Common myeloid progenitor, CD34-positive (primary cell): ENCODE measurements at regions of chr10 and their contacts with region 1.

Region 1: DNA sequence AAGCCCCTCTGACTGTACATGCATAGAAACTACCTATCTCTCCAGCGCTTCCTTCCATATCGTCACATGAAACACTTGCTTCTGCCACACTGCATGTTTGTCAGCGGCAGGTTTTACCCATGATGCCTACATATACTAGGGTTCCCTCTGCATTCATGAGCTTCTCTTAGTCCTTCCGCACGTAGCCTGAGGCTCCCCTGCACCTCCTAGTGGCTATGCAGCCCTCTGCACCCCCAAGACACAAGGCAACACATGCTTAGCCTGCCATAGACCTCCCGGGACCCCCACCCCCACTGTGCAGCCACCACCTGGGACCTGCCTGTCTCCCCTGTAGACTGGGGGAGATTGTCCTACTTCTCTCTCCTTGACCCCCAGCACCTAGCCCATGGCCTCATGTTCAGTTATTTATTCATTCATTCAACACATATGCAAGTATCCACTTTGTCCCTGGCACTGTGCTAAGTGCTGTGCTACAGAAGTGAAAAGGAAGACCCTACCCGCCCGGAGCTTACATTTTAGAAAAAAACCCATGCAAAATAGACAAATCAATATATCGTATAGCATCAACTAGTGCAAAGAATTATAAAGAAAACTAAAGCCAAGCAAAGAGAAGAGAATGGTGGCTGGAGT is 23.5 kb downstream of the TMEM273 start:
- DNase-seq: peak; percentile 75 to 87 (median 83)
- H3K4me3 ChIP-seq: peak overlapping the region in 1 of 7 experiments; percentile 7
- H3K27ac ChIP-seq: no peak overlapping the region
- H3K4me1 ChIP-seq: peaks cover 0 to 14% (median 6%) of the 10 kb centered on the region in 4 experiments
- H3K27me3 ChIP-seq: no peaks in the 10 kb centered on the region

Region 2: GRCh38 chr10:48976196-48976595 is 188.5 kb before region 1 on chr10:
- CTCF ChIA-PET with region 1: interaction called, 52 read pairs
- POLR2A ChIA-PET with region 1: no interaction called
- DNase-seq: peak; percentile 3 to 21 (median 17)
- H3K4me3 ChIP-seq: no peak overlapping the region
- H3K27ac ChIP-seq: no peak overlapping the region
- H3K4me1 ChIP-seq: no peaks in the 10 kb centered on the region
- H3K27me3 ChIP-seq: no peaks in the 10 kb centered on the region

Region 3: GRCh38 chr10:48981310-48981907 is 183.3 kb before region 1 on chr10:
- CTCF ChIA-PET with region 1: interaction called, 52 read pairs
- POLR2A ChIA-PET with region 1: no interaction called
- DNase-seq: peak; percentile 25 to 45 (median 36)
- H3K4me3 ChIP-seq: no peak overlapping the region
- H3K27ac ChIP-seq: no peak overlapping the region
- H3K4me1 ChIP-seq: no peaks in the 10 kb centered on the region
- H3K27me3 ChIP-seq: no peaks in the 10 kb centered on the region

Region 4: DNA sequence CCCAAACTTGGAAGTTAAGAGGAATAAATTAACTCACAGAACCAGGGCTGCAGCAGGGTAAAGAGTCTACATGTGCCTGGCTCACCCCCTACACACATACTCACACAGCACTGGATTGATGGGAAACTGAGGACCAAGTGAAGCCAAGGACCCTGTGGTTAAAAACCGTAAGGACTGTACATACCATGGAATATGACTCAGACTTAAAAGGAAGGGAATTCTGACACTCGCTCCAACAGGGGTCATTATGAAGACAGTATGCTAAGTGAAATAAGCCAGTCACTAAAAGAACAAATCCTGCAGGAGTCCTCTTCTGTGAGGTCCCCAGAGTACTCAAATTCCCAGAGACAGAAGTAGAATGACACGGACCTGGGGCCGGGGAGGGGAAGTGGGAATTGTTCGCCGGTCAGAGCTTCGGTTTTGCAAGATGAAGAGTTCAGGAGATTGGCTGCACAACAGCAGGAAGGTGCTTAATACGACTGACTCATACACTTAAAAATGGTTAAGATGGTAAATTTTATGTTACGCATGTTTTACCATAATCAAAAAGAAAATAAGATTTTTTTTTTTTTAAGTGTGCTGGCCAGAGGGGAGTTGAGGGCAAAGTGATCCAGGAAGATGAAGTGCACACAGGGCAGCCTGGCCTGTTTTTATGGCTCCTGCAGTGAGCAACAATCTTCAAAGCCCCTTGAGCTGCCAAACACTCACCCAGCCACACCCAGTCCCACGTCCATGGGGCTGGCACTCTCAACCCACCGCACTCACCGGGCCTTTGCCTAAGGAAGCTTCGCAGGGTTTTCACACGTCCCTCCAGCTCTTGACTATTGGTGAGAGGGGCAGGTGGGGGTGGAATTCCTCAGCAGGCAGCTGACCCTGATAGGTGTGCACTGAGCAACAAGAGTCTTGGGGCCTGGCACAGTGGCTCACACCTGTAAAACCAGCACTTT is 204.8 kb after region 1 on chr10:
- CTCF ChIA-PET with region 1: no interaction called
- POLR2A ChIA-PET with region 1: no interaction called
- DNase-seq: no peak
- H3K4me3 ChIP-seq: no peak overlapping the region
- H3K27ac ChIP-seq: no peak overlapping the region
- H3K4me1 ChIP-seq: no peaks in the 10 kb centered on the region
- H3K27me3 ChIP-seq: peaks cover 0 to 2% (median 0%) of the 10 kb centered on the region in 5 experiments